ENCODE measurements at regions of chr2 and their contacts with region 1.

Region 1: GRCh38 chr2:120174963-120175581 is 48.1 kb downstream of the TMEM185B start:
- DNase-seq: no peak
- H3K4me3 ChIP-seq: peak overlapping the region in 1 of 4 donors; percentile 5
- H3K27ac ChIP-seq: peak overlapping the region in 2 of 4 donors; percentile 25 to 60
- H3K4me1 ChIP-seq: peaks cover 8 to 12% (median 9%) of the 10 kb centered on the region in 4 donors
- H3K27me3 ChIP-seq: no peaks in the 10 kb centered on the region
- CTCF ChIP-seq: peak; percentile 69 to 78 (median 73)
- EP300 ChIP-seq: no peak
- POLR2A ChIP-seq: no peak

Region 2: DNA sequence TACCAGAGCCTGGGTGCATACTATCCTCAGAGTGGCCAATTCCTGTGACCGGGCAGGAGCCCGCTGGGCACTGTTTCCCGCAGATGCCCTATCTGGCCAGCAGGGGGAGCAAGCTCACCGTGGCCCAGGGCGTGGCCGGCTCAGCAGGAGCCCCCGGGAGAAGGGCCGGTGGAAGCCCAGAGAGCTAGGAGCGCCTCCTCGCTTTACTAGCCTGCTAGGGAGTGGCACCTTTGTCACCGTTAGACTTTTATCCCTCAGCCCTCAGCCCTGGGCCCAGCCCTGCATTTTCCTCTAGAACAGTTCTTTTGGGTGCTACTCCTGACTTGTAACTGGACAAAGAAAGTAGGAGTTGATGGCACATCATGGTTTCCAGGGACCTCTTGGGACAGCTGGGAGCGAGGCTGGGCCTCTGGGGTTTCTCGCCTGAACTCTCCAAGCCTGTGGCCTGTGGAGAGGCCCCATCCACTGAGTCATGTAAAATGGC is 472.1 kb before region 1 on chr2:
- intact Hi-C with region 1: loop called (anchors 10 kb)
- DNase-seq: no peak
- H3K4me3 ChIP-seq: no peak overlapping the region
- H3K27ac ChIP-seq: no peak overlapping the region
- H3K4me1 ChIP-seq: peaks cover 0 to 7% (median 2%) of the 10 kb centered on the region in 4 donors
- H3K27me3 ChIP-seq: no peaks in the 10 kb centered on the region
- CTCF ChIP-seq: peak; percentile 89 to 97 (median 91)
- EP300 ChIP-seq: no peak
- POLR2A ChIP-seq: no peak

Region 3: GRCh38 chr2:119753041-119753929 is 421.8 kb before region 1 on chr2:
- intact Hi-C with region 1: loop called (anchors 5 kb)
- DNase-seq: no peak
- H3K4me3 ChIP-seq: no peak overlapping the region
- H3K27ac ChIP-seq: no peak overlapping the region
- H3K4me1 ChIP-seq: no peaks in the 10 kb centered on the region
- H3K27me3 ChIP-seq: no peaks in the 10 kb centered on the region
- CTCF ChIP-seq: peak; percentile 60 to 75 (median 60)
- EP300 ChIP-seq: no peak
- POLR2A ChIP-seq: no peak

Region 4: DNA sequence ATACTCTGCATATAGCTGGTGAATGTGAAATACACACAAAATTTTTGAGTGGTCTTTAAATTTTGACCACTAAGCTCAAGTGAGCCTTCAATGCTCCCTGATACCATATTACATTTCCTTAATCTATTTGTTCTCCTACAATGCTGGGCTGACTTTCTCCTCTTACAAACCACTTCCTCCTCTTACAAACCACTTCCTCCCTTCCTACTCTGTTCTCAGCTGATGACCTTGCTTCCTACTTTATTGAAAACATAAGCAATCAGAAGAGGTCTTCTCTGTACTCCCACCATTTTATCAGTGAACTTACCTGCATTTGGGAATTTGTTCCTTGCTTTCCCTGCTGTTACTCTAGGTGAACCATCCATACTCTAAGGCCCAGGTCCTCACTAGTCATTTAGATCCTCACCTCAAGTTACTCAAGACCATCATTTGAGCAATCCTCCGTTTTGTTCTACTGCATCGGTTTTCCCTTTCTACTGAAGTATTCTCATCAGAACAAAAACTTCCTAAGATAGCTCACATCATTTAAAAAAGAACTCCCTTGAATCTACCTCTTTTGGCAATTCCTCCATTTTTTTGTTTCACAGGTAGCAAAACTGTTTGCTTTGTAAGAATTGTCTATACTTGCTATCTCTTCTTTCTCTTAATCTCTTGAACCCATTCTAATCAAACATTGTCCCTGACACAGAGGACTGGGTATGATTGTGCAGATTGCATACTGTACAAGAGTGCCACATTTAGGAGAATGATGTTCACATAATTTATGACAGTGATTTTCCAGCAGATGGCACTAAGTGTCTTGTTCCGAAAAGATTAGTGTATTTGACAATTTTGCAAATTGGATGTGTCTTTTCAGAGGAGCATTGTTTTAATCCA is 65.6 kb before region 1 on chr2:
- intact Hi-C with region 1: loop called (anchors 2 kb)
- DNase-seq: no peak
- H3K4me3 ChIP-seq: no peak overlapping the region
- H3K27ac ChIP-seq: no peak overlapping the region
- H3K4me1 ChIP-seq: peaks cover 25 to 30% (median 26%) of the 10 kb centered on the region in 4 donors
- H3K27me3 ChIP-seq: no peaks in the 10 kb centered on the region
- CTCF ChIP-seq: peak; percentile 35 to 45 (median 39)
- EP300 ChIP-seq: no peak
- POLR2A ChIP-seq: no peak

Region 5: DNA sequence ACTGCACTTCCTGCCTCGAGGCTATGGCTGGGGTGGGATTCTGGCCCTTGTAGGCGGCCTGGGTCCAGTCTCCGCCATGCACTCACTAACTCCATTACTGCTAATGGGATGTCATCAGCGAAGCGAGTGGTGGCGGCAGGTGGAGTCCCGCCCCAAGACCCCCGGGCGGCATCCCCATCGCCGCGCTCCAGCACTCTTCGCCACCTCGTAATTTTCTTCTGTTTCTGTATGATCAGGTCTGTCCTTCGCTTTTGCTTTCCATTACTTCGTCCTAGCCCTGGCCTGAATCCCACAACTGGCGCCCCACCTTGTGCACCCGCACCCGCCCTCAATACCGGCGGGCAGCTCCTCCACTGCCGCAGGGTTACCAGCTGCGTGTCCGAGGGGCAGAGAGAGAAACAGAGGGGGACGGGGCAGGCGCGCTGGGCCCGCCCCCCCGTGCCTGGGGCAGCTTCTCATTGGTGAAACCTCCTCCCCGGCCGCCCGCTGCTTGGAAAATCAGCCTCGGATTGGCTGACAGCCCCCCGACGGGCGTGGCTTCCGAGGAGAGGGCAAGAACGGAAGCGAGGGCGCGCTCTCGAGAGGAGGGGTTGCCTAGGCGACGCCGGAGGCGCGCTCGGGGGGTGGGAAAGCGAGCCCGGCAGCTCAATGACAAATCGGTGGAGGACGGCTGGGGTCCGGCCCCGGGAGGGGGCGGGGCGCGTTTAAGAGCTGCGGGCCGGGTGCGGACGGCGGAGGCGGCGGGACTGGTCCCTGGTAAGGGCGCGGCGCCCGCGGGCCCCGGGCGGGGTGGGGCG is 77.4 kb after region 1 on chr2 and contains the start of gene RALB:
- intact Hi-C with region 1: no loop called
- DNase-seq: peak; percentile 100
- H3K4me3 ChIP-seq: peak within 1 kb of the TSS; percentile 78 to 100 (median 88)
- H3K27ac ChIP-seq: peak within 1 kb of the TSS; percentile 87 to 98 (median 92)
- H3K4me1 ChIP-seq: peaks cover 23 to 47% (median 41%) of the 10 kb centered on the region in 4 donors
- H3K27me3 ChIP-seq: no peaks in the 10 kb centered on the region
- CTCF ChIP-seq: no peak
- EP300 ChIP-seq: no peak
- POLR2A ChIP-seq: no peak
- total RNA-seq, gene RALB: 41.5 to 59.1 (median 54.4) TPM

Region 6: GRCh38 chr2:120390081-120391055 is 215.3 kb after region 1 on chr2:
- intact Hi-C with region 1: no loop called
- DNase-seq: no peak
- H3K4me3 ChIP-seq: no peak overlapping the region
- H3K27ac ChIP-seq: no peak overlapping the region
- H3K4me1 ChIP-seq: no peaks in the 10 kb centered on the region
- H3K27me3 ChIP-seq: peaks cover 0 to 41% (median 0%) of the 10 kb centered on the region in 4 donors
- CTCF ChIP-seq: no peak
- EP300 ChIP-seq: no peak
- POLR2A ChIP-seq: no peak

Measured in esophagus muscularis mucosa (tissue), 4 donors.